ENCODE measurements at regions of chr1 and their contacts with region 1.

Region 1: DNA sequence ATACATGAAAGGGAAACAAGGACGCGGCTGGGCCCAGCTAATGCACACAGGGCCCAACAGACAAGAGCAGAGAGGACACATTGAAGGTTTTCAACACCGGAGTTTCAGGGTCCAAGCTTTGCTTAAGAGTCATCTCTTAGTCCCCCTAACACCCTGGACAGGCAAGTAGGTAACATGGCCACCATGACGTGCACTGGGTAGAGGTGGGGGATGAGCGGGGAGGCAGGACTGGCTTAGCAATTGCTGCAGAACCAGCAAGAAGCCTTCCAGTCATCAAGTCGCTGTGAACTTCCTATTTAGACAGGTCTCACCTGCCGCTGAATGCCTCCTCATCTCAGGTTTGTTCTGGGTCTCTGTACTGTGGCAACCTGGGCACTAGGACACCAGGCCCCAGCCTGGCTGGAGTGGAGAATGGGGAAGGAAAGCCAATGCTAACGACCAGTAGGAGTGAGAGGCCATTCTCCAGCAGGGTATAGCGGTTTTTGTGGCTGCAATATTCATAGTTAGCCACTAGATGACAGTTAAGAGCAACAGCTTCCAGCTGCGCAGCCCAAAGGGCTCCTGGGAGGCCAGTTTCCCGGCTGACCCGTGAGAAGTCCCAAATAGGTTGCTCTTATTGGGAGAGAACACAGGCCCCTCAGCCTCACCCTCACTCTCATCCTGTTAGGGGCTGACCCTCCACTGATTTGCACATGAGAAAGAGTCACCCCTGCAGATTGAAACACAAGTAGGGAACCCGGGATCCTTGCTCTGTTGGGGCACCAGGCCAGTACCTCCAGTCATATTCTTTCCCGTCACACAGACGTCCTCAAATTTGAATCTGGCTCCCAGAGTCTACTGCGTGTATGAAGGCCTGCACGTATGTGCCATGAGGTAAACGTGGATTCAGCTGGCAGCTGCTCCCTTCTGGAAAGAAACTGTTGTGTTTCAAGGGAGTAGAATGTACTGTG is 6.0 kb upstream of the PIGC start:
- DNase-seq: peak in 6 of 14 experiments; percentile 4 to 69 (median 47)
- ATAC-seq: peak; percentile 96
- H3K4me3 ChIP-seq: no peak overlapping the region
- H3K4me3 Mint-ChIP-seq: no peak overlapping the region
- H3K27ac ChIP-seq: no peak overlapping the region
- H3K27ac Mint-ChIP-seq: no peak overlapping the region
- H3K4me1 ChIP-seq: peaks cover 18% of the 10 kb centered on the region
- H3K4me1 Mint-ChIP-seq: peaks cover 17% of the 10 kb centered on the region
- H3K27me3 ChIP-seq: no peaks in the 10 kb centered on the region
- H3K27me3 Mint-ChIP-seq: no peaks in the 10 kb centered on the region
- CTCF ChIP-seq: peak; percentile 77

Region 2: GRCh38 chr1:172420385-172420784 is 29.5 kb before region 1 on chr1 and contains the start of gene C1orf105:
- CTCF ChIA-PET with region 1: no interaction called
- POLR2A ChIA-PET with region 1: no interaction called
- intact Hi-C with region 1: no loop called
- DNase-seq: no peak
- ATAC-seq: no peak
- H3K4me3 ChIP-seq: no peak within 1 kb of the TSS
- H3K4me3 Mint-ChIP-seq: no peak within 1 kb of the TSS
- H3K27ac ChIP-seq: no peak within 1 kb of the TSS
- H3K27ac Mint-ChIP-seq: no peak within 1 kb of the TSS
- H3K4me1 ChIP-seq: no peaks in the 10 kb centered on the region
- H3K4me1 Mint-ChIP-seq: peaks cover 23% of the 10 kb centered on the region
- H3K27me3 ChIP-seq: no peaks in the 10 kb centered on the region
- H3K27me3 Mint-ChIP-seq: no peaks in the 10 kb centered on the region
- CTCF ChIP-seq: no peak
- total RNA-seq, gene C1orf105: not detected

Region 3: DNA sequence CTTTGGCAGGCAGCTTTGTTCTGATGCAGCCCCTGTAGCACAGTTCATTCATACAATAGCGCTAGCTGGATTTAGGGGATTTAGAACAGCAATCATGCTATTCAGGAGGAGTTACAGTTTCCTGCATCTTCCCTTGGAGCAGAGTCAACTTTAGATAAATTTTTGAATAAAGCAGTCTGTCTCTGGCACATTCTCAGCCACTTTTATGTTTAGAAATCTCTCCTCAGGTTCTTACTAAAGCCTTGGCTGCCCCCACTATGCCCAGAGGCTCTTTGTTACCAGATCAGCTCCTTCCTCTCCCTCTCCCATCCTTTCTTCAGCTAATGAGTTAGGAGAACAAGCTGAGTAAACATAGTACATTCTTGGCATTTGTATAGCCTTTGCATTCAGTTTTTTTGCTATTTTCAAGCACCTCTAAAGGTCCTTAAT is 11.0 kb after region 1 on chr1:
- CTCF ChIA-PET with region 1: interaction called, 11 read pairs
- POLR2A ChIA-PET with region 1: no interaction called
- intact Hi-C with region 1: no loop called
- DNase-seq: no peak
- ATAC-seq: no peak
- H3K4me3 ChIP-seq: no peak overlapping the region
- H3K4me3 Mint-ChIP-seq: no peak overlapping the region
- H3K27ac ChIP-seq: no peak overlapping the region
- H3K27ac Mint-ChIP-seq: no peak overlapping the region
- H3K4me1 ChIP-seq: no peaks in the 10 kb centered on the region
- H3K4me1 Mint-ChIP-seq: no peaks in the 10 kb centered on the region
- H3K27me3 ChIP-seq: no peaks in the 10 kb centered on the region
- H3K27me3 Mint-ChIP-seq: no peaks in the 10 kb centered on the region
- CTCF ChIP-seq: no peak

Region 4: DNA sequence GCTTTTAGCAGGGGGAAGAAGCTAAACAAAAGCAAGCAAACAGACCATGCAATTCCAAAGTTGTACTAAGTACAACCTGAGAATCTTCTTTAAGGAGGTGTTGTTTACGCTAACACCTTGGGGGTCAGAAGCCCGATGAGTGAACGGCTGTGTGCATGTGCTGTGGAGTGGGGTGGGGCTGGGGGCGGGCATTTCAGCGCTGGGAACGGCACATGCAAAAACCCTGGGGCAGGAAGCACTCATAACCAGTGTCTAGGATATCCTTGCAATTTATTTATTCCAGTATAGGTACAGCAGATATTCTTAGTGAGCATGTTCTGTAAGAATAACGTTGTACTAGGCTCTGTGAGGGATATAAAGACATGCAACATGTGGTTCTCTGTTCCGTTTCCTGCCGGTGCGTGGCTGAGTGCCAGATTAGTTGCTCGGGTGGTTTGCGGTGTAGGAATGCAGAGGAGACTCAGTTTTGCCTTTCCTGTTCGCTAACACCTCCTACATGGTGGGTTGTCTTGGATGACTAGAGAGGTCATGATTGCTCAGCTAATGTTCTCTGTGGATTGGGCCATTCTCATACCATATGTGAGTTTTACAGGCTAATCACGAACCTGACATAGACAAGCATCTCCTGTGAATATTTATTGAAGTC is 212.7 kb after region 1 on chr1:
- CTCF ChIA-PET with region 1: no interaction called
- POLR2A ChIA-PET with region 1: no interaction called
- intact Hi-C with region 1: loop called in 1 of 2 experiments (anchors 1 kb)
- DNase-seq: peak; percentile 61 to 91 (median 80)
- ATAC-seq: peak; percentile 84
- H3K4me3 ChIP-seq: peak overlapping the region; percentile 60
- H3K4me3 Mint-ChIP-seq: peak overlapping the region; percentile 43
- H3K27ac ChIP-seq: peak overlapping the region in 1 of 2 donors; percentile 26
- H3K27ac Mint-ChIP-seq: peak overlapping the region; percentile 36
- H3K4me1 ChIP-seq: peaks cover 49% of the 10 kb centered on the region
- H3K4me1 Mint-ChIP-seq: peaks cover 64% of the 10 kb centered on the region
- H3K27me3 ChIP-seq: no peaks in the 10 kb centered on the region
- H3K27me3 Mint-ChIP-seq: no peaks in the 10 kb centered on the region
- CTCF ChIP-seq: no peak

Region 5: DNA sequence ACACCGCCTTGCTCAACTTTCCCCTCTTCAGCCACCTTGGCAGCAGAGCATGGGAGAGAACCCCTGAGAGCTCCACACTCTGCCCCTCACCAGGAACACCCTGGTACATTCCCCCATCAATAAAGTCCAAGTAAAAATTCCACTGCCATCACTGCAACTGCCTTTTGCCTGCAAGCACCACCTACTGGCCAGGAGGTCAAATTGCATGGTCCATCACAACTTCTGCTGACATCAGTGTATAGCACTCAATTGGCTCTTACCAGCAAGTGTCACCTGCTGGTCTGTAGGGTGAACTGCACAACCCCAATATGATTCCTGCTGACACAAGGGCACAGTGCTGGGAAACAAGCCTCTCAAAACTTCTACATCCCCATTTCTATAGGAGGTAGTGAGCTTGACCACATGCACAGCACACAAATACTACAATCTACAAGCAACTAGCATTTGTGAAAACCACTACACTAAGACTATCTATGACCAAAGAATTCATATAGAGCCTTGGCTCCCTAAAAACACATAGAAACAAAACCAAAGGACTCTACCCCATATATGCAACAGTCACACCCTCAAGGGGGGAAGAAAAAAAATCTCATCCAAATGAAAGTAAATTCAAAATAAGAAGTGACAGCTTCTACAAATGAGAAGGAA is 278.2 kb after region 1 on chr1:
- CTCF ChIA-PET with region 1: no interaction called
- POLR2A ChIA-PET with region 1: no interaction called
- intact Hi-C with region 1: loop called in 1 of 2 experiments (anchors 2 kb)
- DNase-seq: peak in 7 of 14 experiments; percentile 19 to 78 (median 39)
- ATAC-seq: peak; percentile 98
- H3K4me3 ChIP-seq: no peak overlapping the region
- H3K4me3 Mint-ChIP-seq: no peak overlapping the region
- H3K27ac ChIP-seq: no peak overlapping the region
- H3K27ac Mint-ChIP-seq: no peak overlapping the region
- H3K4me1 ChIP-seq: peaks cover 8% of the 10 kb centered on the region
- H3K4me1 Mint-ChIP-seq: peaks cover 22% of the 10 kb centered on the region
- H3K27me3 ChIP-seq: no peaks in the 10 kb centered on the region
- H3K27me3 Mint-ChIP-seq: no peaks in the 10 kb centered on the region
- CTCF ChIP-seq: peak; percentile 64